ENCODE measurements at regions of chr2 and their contacts with region 1.

Region 1: GRCh38 chr2:86623651-86624541 is at the start of gene RNF103:
- DNase-seq: peak; percentile 96
- ATAC-seq: peak; percentile 89
- H3K4me3 Mint-ChIP-seq: peak within 1 kb of the TSS; percentile 95
- H3K27ac Mint-ChIP-seq: peak within 1 kb of the TSS; percentile 96
- H3K4me1 Mint-ChIP-seq: peaks cover 29% of the 10 kb centered on the region
- H3K27me3 Mint-ChIP-seq: peaks cover 2% of the 10 kb centered on the region
- total RNA-seq, gene RNF103: 8.4 to 10.0 TPM

Region 2: DNA sequence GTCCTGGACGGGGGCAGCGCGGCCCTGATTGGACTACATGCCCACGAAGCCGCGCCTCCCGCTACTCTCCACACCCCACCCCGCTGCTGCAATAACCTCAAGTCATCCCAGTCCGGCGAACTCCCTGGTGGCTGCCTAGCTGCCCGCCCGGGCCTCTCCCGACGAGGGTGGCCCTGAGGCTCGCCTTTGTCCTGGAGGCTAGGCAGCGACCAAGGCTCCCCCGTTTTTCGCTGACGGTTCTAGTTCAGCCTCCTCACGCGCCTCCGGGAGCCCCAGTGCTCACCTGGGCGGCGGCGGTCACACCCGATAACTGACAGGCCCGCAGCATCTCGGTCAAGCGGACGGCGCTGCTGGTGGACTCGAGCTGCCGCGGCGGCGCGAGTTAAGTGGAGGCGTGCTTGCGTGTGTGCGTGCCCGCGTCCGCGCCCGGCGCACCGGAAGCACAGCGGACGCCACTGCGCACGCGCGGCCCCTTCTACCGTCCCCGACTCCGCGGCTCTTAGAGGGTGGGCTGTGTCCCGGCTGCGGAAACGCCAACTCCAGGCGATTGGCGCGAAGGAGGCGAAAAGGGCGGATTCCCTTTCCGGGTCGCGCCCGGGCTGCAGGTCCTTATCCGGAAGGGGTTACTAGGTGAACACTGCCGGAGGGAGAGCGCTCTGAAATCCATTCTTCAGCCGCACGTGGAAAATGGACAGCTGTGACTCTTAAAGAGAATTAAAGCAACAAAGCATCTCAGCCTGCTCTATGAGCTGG is 428.7 kb before region 1 on chr2 and contains the start of gene IMMT:
- CTCF ChIA-PET with region 1: no interaction called
- POLR2A ChIA-PET with region 1: no interaction called
- intact Hi-C with region 1: loop called in 1 of 2 experiments (anchors 1 kb)
- DNase-seq: peak; percentile 97
- ATAC-seq: peak; percentile 93
- H3K4me3 Mint-ChIP-seq: peak within 1 kb of the TSS; percentile 81
- H3K27ac Mint-ChIP-seq: peak within 1 kb of the TSS; percentile 92
- H3K4me1 Mint-ChIP-seq: peaks cover 44% of the 10 kb centered on the region
- H3K27me3 Mint-ChIP-seq: no peaks in the 10 kb centered on the region
- total RNA-seq, gene IMMT: 172 to 182 TPM

Region 3: DNA sequence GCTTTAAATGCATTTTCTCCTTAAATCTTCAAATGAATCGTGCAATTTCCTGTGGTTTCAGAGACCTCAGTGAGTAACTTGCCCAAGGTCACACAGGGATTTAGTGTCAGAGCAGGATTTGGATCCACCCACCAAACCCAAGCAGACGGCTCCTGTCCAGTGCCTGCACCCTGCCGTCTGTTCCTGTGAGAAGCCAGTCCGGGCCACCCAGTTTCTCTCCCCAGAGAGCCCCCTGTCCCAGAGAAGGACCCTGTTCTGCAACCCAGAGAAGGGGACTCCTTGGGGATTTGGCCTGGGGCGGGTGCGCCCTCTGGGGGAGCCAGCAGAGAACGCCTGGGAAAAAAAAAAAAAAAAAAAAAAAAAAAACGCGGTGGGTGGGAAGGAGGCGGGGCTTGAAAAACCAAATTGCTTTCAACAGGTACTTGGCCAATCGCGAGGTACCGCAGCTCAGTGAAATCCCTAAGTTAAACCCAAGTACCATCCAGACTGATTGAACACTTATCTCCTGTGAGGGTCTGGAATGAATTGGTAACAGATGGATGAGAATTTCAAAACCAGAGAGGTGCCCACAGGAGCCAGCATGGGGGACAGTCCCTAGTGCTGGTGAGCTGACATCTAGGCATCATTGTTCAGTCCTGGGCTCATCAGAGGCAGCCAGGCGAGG is 255.6 kb before region 1 on chr2:
- CTCF ChIA-PET with region 1: no interaction called
- POLR2A ChIA-PET with region 1: interaction called, 3 read pairs
- intact Hi-C with region 1: loop called in 1 of 2 experiments (anchors 2 kb)
- DNase-seq: peak; percentile 65
- ATAC-seq: peak; percentile 76
- H3K4me3 Mint-ChIP-seq: peak overlapping the region; percentile 53
- H3K27ac Mint-ChIP-seq: peak overlapping the region; percentile 72
- H3K4me1 Mint-ChIP-seq: peaks cover 47% of the 10 kb centered on the region
- H3K27me3 Mint-ChIP-seq: no peaks in the 10 kb centered on the region

Region 4: GRCh38 chr2:86440631-86441391 is 183.1 kb before region 1 on chr2 and contains the start of gene KDM3A:
- CTCF ChIA-PET with region 1: no interaction called
- POLR2A ChIA-PET with region 1: interaction called, 16 read pairs
- intact Hi-C with region 1: loop called (anchors 1 to 2 kb)
- DNase-seq: peak; percentile 100
- ATAC-seq: peak; percentile 88
- H3K4me3 Mint-ChIP-seq: peak within 1 kb of the TSS; percentile 90
- H3K27ac Mint-ChIP-seq: peak within 1 kb of the TSS; percentile 99
- H3K4me1 Mint-ChIP-seq: peaks cover 37% of the 10 kb centered on the region
- H3K27me3 Mint-ChIP-seq: no peaks in the 10 kb centered on the region
- total RNA-seq, gene KDM3A: 68.9 to 82.9 TPM

Region 5: DNA sequence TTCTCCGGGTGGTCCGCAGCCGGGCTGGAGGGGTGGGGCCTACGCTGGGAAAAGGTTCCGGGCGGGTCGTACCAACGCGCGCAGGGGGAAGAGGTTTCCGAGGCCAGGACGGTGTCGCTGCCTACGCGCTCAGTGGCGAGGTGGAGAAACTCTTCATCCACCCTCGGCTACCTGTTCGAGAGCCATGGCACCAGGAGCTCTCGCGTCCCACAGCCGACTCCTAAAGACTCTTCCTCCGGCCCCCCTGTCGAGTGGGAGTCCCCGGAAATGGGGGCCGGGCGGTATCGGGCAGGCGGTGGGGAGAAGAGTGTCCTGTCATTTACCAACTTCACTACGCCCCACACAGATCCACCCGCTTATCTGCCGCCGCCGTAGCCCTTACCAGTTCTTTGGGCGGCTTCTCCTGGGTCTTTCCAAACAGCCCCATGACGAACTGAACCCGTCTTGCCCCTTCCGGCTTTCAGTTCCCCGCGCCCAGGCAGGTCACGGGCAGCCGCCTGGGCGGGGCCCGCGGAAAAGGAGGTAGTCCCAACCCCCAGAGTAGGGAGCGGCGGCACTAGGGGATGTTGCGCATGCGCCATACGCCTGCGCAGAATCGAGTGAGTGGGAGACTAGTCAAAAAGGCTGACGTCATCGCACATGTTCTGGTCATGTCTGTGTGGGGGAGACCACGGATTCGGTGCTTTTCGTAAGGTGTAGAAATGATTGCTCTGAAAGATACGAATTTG is 60.8 kb before region 1 on chr2 and contains the start of gene CHMP3:
- CTCF ChIA-PET with region 1: no interaction called
- POLR2A ChIA-PET with region 1: no interaction called
- intact Hi-C with region 1: loop called (anchors 1 kb)
- DNase-seq: peak; percentile 97
- ATAC-seq: peak; percentile 92
- H3K4me3 Mint-ChIP-seq: peak within 1 kb of the TSS; percentile 95
- H3K27ac Mint-ChIP-seq: peak within 1 kb of the TSS; percentile 99
- H3K4me1 Mint-ChIP-seq: peaks cover 30% of the 10 kb centered on the region
- H3K27me3 Mint-ChIP-seq: no peaks in the 10 kb centered on the region
- total RNA-seq, gene CHMP3: 35.0 to 35.8 TPM

Region 6: DNA sequence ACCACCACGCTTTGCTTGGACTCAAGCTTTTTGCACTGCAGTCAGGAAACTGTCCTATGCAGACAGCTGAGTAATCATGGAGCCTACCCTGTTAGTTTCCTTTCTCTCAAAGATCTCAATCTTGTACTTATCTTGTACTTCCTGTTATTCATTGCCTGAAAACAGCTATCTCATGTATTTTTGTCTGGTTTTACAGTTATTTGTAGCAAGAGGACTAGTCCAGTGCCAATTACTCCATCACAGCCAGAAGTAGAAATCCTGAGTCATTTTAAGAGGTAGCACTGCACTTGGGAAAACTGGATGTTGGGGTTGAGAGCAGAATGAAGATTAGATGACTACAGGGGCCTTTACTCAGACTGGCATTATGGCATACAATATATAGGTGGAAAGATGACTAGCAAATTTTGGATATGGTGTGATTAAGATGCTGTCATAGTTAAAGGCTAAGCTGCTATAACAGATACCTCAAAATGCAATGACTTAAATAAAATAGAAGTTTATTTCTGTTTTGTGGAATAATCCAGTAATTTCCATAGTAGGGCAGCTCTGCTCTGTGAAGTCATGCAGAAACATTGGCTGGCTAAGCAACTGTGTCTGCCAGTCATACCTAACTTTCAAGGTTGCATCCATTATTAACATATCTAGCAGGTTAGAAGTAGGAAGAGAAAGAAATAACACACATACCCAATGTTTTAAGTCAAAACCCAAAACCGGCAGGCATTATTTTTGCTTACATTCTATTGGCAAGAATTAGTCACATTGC is 39.6 kb before region 1 on chr2:
- CTCF ChIA-PET with region 1: no interaction called
- POLR2A ChIA-PET with region 1: interaction called, 3 read pairs
- intact Hi-C with region 1: loop called (anchors 2 to 5 kb)
- DNase-seq: peak; percentile 16
- ATAC-seq: peak; percentile 88
- H3K4me3 Mint-ChIP-seq: no peak overlapping the region
- H3K27ac Mint-ChIP-seq: peak overlapping the region; percentile 74
- H3K4me1 Mint-ChIP-seq: peaks cover 20% of the 10 kb centered on the region
- H3K27me3 Mint-ChIP-seq: no peaks in the 10 kb centered on the region

Measured in activated CD4-positive, alpha-beta T cell treated with anti-CD3 and anti-CD28 coated beads for 36 hours (primary cell).